ENCODE measurements at regions of chr15 and their contacts with region 1.

Region 1: GRCh38 chr15:101652098-101652782 is at the start of gene TM2D3:
- DNase-seq: peak; percentile 98
- ATAC-seq: peak; percentile 97
- total RNA-seq, gene TM2D3: 49.9 TPM

Region 2: DNA sequence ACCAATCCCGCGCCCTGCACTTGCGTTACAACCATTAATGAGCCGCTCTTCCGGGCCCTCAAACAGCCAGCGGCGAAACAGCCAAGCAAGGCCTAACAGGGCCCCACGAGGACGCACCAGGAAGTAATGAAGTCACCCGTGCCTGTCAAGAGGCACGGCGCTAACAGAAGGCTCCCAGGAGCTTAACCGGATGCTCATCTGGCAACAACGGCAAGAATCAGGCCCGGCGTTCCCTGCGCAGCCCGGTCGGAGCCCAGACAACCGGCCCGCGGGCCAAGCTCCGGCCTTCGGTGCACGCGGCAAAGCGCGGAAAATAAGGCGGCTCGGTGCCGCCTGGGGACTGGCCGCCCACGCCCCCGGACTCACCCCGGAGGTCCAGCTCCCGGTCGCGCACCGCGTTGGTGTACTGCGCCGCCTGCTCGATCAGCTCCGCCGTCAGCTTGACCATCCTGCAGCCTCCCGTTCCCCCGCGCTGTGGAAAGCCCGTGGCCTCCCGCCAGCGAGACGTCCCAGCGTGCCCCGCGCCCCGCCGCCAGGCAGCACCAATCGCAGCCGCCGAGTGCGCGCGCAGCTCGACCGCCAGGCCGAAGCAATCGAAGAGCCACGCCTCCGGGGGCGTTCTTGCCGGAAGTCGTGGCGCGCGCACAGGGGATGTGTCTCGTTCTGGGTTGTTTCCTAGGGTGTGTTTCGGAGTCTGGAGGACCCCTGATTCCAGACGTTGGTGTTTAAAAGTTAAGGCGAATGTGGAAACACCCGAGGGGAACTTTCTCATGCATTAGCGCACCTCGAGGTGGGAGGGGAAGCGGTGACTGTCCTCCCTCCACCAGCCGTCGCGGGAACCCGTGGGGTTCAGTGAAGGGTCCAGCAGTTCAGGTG is 357.3 kb before region 1 on chr15 and contains the start of gene SNRPA1:
- intact Hi-C with region 1: loop called (anchors 2 kb)
- DNase-seq: peak; percentile 100
- ATAC-seq: peak; percentile 96
- total RNA-seq, gene SNRPA1: 30.4 TPM